OCI-LY7 (cell line): ENCODE measurements at regions of chr17 and their contacts with region 1.

Region 1: DNA sequence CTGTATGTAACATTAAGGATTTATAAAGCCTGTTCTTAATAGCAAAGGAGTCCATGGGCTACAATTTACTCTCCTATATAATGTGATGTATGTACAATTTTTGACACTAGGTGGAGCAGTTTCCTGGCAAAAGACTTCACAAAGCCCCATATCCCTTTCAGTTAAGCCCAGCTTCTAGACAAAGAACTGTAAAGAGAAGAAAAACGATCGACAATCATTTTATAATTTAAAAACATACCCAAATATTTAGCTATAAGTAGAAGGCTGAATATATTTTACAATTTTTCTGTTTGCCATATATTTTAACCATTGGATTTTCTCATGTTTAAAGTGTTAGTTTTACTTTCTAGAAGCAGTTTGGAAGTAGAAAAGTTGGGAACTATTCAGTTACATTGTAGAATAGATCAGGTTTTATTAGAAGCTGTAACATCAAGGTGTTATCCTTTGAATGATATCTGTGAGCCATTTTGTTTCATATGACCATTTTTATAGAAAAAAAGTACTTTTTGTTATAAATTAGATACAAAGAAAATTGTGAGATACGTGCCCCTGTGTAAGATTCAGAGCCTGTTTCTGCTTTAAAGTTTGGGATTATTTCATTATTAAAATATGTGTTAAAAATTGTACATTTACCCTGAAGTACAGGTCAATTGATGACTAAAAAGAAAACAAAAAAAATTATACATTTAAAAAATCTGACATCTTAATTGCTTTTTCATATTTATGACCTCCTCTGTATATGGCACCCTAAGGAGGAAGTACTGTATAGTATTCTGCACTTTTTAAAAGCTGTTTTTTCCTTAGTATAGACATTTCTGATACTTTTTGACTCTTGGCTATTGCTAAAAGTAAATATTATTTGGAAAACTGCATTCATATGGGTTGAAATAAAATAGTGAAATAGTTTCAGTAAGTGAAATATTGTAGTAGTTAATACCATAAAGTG is 46.3 kb downstream of the VMP1 start:
- DNase-seq: peak; percentile 82
- H3K4me3 ChIP-seq: no peak overlapping the region
- H3K27ac ChIP-seq: no peak overlapping the region
- H3K4me1 ChIP-seq: peaks cover 8% of the 10 kb centered on the region
- CTCF ChIP-seq: peak; percentile 97

Region 2: GRCh38 chr17:59840329-59840907 is 86.6 kb after region 1 on chr17:
- CTCF ChIA-PET with region 1: no interaction called
- POLR2A ChIA-PET with region 1: interaction called, 5 read pairs
- intact Hi-C with region 1: loop called (anchors 1 kb)
- DNase-seq: no peak
- H3K4me3 ChIP-seq: peak overlapping the region; percentile 72
- H3K27ac ChIP-seq: no peak overlapping the region
- H3K4me1 ChIP-seq: peaks cover 63% of the 10 kb centered on the region
- CTCF ChIP-seq: no peak

Region 3: GRCh38 chr17:59859444-59860025 is 105.7 kb after region 1 on chr17:
- CTCF ChIA-PET with region 1: interaction called, 3 read pairs
- POLR2A ChIA-PET with region 1: no interaction called
- intact Hi-C with region 1: loop called (anchors 2 kb)
- DNase-seq: peak; percentile 47
- H3K4me3 ChIP-seq: no peak overlapping the region
- H3K27ac ChIP-seq: no peak overlapping the region
- H3K4me1 ChIP-seq: no peaks in the 10 kb centered on the region
- CTCF ChIP-seq: peak; percentile 80

Region 4: DNA sequence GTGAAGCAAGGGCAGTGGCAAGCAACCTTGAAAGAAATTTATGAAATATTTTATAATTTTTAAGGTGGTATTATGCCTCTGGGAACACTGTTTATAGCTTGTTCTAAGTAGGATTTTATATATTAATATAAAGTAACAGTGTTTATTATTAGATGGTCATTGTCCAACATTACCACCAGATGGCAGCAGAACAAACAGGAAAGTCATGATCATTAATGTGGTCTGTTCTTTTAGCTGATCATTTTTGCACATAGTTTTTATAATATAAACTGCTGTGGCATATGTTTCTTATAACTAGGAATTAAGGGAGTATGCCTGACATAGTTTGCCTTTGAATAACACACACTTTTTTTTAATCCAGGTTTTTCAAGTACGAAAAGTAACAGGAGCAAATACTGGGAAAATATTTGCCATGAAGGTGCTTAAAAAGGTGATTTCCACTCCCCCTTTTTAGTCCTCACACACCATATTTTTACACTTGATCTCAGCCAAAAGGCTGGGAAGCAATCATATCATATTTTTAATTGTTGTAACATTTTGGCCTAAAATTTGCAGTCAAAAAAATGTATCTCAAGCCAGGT is 160.6 kb after region 1 on chr17:
- CTCF ChIA-PET with region 1: no interaction called
- POLR2A ChIA-PET with region 1: no interaction called
- intact Hi-C with region 1: loop called (anchors 5 kb)
- DNase-seq: peak; percentile 67
- H3K4me3 ChIP-seq: no peak overlapping the region
- H3K27ac ChIP-seq: no peak overlapping the region
- H3K4me1 ChIP-seq: no peaks in the 10 kb centered on the region
- CTCF ChIP-seq: peak; percentile 93

Region 5: DNA sequence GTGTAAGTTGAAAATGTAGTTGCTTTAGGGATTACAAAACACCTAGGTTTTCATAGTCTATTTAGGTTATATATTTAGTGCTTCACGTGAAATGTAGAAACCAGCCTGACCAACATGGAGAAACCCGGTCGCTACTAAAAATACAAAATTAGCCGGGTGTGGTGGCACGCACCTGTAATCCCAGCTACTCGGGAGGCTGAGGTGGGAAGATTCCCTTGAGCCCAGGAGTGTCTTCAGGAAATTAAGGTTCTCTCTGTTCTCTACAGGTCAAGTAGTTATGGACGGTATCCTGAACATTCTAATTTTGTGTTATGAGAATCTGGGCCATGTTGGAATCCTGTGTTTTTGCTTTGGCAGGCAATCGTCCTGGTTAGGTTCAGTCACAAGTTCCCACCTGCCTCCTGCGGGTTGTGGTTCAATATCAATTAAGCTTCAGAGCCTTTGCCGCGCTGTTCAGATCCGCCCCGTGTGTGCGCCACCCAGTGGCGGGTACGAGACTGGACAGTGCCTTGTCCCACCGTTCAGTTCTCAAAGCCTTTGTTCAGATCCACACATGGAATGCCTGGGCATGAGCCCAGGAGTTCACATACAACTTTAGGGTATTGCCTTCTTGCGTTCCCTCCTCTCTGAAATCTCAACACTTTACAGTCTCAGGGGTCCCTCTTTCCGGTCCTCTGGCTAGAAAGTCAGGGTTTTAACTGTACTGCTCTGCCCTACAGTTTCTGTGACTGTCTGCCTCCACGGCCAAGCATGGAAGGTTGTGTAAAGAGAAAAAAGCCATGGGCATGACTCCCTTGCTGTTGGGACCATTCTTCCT is 283.2 kb after region 1 on chr17:
- CTCF ChIA-PET with region 1: no interaction called
- POLR2A ChIA-PET with region 1: no interaction called
- intact Hi-C with region 1: loop called (anchors 5 kb)
- DNase-seq: peak; percentile 82
- H3K4me3 ChIP-seq: no peak overlapping the region
- H3K27ac ChIP-seq: no peak overlapping the region
- H3K4me1 ChIP-seq: peaks cover 5% of the 10 kb centered on the region
- CTCF ChIP-seq: peak; percentile 99

Region 6: DNA sequence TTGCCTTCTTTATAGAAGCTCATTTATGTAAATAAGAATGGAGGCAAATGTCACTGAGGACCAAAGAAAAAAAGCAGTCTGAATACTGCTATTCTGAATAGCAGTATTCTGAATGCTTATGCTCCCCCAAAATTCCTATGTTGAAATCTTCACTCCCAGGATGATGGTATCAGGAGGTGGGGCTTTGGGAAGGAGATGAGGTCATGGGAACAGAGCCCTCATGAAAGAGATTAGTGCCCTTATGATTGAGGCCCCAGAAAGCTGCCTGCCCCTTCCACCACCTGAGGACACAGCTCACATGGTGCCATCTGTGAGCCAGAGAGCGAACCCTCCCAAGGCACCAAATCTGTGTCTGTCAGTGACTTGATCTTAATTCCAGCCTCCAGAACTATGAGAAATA is 296.1 kb after region 1 on chr17:
- CTCF ChIA-PET with region 1: no interaction called
- POLR2A ChIA-PET with region 1: no interaction called
- intact Hi-C with region 1: no loop called
- DNase-seq: no peak
- H3K4me3 ChIP-seq: no peak overlapping the region
- H3K27ac ChIP-seq: no peak overlapping the region
- H3K4me1 ChIP-seq: no peaks in the 10 kb centered on the region
- CTCF ChIP-seq: no peak